ENCODE measurements at regions of chr17 and their contacts with region 1.

Region 1: GRCh38 chr17:76626456-76626855 is 17.1 kb downstream of the ST6GALNAC1 start:
- DNase-seq: no peak
- ATAC-seq: no peak

Region 2: GRCh38 chr17:76264755-76265596 is 361.5 kb before region 1 on chr17 and contains the start of gene UBALD2:
- intact Hi-C with region 1: no loop called
- DNase-seq: peak; percentile 99
- ATAC-seq: peak; percentile 97
- total RNA-seq, gene UBALD2: 38.4 TPM

Region 3: GRCh38 chr17:76523084-76524037 is 103.1 kb before region 1 on chr17:
- intact Hi-C with region 1: loop called (anchors 5 kb)
- DNase-seq: peak; percentile 87
- ATAC-seq: peak; percentile 61